ENCODE measurements at regions of chr17 and their contacts with region 1.

Region 1: GRCh38 chr17:74305865-74306654 is 20.0 kb upstream of the KIF19 start:
- DNase-seq: no peak
- H3K4me3 ChIP-seq: no peak overlapping the region
- H3K27ac ChIP-seq: no peak overlapping the region
- H3K4me1 ChIP-seq: no peaks in the 10 kb centered on the region
- H3K27me3 ChIP-seq: no peaks in the 10 kb centered on the region
- CTCF ChIP-seq: no peak
- POLR2A ChIP-seq: no peak

Region 2: DNA sequence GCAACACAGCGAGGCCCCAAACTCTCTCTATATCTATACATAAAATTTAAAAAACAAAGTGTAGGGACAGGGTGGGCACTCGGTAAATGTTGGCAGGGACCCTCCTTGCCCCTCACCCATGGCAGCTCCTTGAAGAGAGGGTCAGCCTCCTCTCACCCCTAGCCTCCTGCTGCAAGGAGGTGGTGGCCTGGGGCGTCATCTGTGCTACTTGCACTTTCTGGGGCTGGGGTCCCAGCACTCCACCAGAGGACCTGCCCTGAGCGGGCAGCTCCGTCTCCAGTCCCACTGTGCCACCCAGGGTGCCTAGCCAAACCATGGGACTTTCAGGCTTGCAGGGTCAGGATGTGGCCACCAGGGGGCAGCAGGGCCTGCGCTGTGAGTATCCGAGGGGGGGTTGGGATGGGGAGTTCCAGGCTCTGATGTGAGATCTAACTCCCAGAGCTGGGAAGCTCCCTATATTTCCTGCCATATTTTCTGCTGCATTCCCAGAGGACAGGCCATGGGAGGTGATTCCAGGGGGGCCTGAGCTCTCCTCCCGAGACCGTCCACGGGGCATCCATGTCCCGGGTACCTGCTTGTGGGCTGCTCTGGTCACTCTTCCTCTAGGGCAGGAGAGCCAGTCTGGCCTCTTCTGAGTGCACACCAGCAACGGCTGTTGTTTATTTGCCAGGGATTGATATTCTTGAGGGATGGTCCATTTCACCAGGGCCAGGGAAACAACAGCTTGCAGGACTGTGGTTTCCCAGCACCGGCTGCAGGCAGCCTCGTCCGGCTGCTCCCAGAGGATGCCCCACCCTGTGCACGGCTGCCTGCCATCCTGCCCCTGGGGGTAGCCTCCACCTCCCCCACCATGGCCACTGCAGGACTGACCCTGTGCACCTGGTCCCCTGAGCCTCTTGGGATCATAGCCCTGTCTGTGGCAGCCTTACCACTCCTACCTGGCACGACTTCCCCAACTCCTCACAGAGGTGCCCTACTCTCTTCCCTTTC is 62.3 kb after region 1 on chr17:
- intact Hi-C with region 1: loop called (anchors 10 kb)
- DNase-seq: no peak
- H3K4me3 ChIP-seq: no peak overlapping the region
- H3K27ac ChIP-seq: no peak overlapping the region
- H3K4me1 ChIP-seq: no peaks in the 10 kb centered on the region
- H3K27me3 ChIP-seq: no peaks in the 10 kb centered on the region
- CTCF ChIP-seq: peak; percentile 77 to 93 (median 78)
- POLR2A ChIP-seq: no peak

Measured in vagina (tissue), 2 donors.